IMR-90 (cell line): ENCODE measurements at regions of chr6 and their contacts with region 1.

Region 1: DNA sequence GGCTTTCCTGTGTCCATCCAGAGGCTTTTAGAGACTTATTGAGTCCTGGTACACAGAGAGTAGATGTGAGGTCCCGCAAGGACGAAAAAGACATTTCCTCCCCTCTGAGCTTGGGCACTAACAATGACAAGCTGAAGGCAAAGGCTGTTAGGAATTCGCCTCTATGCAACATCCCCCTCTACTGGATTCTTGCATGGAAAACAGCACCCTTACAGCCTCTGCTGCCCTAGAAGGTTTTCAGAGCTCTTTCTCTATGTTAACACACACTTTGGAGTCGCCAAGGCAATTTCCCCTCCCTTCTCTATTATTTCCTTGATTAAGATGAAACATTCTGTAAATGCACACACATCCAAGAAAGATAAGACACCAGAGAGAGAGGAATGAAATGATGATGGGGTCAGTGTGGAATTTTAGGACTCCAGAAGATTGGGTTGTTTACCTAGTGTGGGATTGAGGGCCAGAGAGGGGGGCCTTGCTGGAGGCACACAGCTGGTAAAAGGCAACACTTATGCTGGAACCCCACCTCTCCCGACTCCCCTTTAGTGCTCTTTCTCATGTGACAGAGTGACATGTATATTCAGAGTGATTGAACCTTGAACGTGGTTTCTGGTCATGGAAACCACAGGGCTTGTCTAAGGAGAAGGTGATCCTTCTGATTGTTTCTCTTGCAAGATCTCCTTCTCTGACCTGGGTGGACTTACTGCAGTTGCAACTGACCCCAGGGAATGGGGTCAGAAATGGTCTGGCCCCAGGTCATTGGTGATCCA is 300.7 kb downstream of the CLIC5 start:
- DNase-seq: peak; percentile 91
- ATAC-seq: peak; percentile 91
- H3K4me3 ChIP-seq: no peak overlapping the region
- H3K27ac ChIP-seq: no peak overlapping the region
- H3K4me1 ChIP-seq: peaks cover 15% of the 10 kb centered on the region
- H3K27me3 ChIP-seq: no peaks in the 10 kb centered on the region
- CTCF ChIP-seq: peak; percentile 94
- POLR2A ChIP-seq: 0 out of 2 replicates have a peak, but pooled peaks have one; percentile 58
- RAD21 ChIP-seq: peak; percentile 99

Region 2: GRCh38 chr6:44185953-44186634 is 1528.8 kb before region 1 on chr6:
- CTCF ChIA-PET with region 1: no interaction called
- POLR2A ChIA-PET with region 1: no interaction called
- dilution Hi-C with region 1: no loop called
- in situ Hi-C with region 1: no loop called
- intact Hi-C with region 1: no loop called
- DNase-seq: no peak
- ATAC-seq: no peak
- H3K4me3 ChIP-seq: no peak overlapping the region
- H3K27ac ChIP-seq: no peak overlapping the region
- H3K4me1 ChIP-seq: no peaks in the 10 kb centered on the region
- H3K27me3 ChIP-seq: peaks cover 29% of the 10 kb centered on the region
- CTCF ChIP-seq: no peak
- POLR2A ChIP-seq: no peak
- RAD21 ChIP-seq: no peak

Region 3: GRCh38 chr6:44630125-44631028 is 1084.5 kb before region 1 on chr6:
- CTCF ChIA-PET with region 1: interaction called, 16 read pairs
- POLR2A ChIA-PET with region 1: no interaction called
- dilution Hi-C with region 1: no loop called
- in situ Hi-C with region 1: no loop called
- intact Hi-C with region 1: loop called (anchors 1 kb)
- DNase-seq: peak; percentile 51
- ATAC-seq: peak; percentile 95
- H3K4me3 ChIP-seq: no peak overlapping the region
- H3K27ac ChIP-seq: no peak overlapping the region
- H3K4me1 ChIP-seq: no peaks in the 10 kb centered on the region
- H3K27me3 ChIP-seq: peaks cover 19% of the 10 kb centered on the region
- CTCF ChIP-seq: peak; percentile 68
- POLR2A ChIP-seq: no peak
- RAD21 ChIP-seq: peak; percentile 74

Region 4: DNA sequence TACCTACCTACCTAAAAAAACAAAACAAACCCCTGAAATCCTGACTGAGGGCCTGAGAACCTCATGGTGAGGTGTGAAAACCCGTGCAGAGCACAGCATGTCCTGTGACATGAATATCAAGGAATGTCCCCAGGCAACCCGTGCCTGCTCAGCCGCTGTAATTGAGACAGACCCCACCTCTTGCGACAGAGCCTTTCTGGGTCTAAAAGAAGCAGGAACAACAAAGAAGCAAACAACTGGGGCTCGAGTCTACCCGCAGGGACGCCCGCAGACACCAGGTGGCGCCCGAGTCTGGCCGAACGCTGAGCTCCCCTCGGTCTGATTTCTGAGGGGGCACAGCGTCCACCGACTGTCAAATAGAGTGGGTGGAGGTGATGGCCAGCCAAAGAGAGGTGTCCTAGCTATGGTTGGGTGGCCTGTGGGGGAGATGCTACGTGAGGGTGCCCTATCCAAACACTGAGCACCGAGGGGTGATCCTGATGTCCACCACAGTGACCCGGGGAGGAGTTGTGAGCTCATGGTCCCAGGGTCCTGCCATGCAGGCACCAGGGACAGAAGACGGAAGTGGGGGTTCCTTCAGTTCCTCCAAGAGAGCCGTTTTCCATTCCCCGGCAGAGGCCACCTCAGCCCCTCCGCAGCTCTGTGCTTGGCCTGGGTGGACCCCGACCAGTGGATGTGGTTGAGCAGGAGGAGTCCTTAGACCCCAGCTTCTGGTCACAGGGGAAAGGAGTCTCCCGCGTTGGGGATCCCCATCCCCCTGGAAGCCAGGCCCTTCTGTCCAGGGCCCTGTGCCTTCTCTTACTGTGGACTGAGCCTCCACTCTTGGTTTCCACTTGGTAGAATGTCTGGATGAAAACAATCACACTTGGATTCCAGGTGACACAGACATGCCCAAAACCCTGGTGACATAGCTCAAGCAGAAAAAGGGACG is 1059.2 kb before region 1 on chr6:
- CTCF ChIA-PET with region 1: interaction called, 6 read pairs
- POLR2A ChIA-PET with region 1: no interaction called
- dilution Hi-C with region 1: no loop called
- in situ Hi-C with region 1: no loop called
- intact Hi-C with region 1: loop called (anchors 2 kb)
- DNase-seq: peak; percentile 28
- ATAC-seq: peak; percentile 70
- H3K4me3 ChIP-seq: no peak overlapping the region
- H3K27ac ChIP-seq: no peak overlapping the region
- H3K4me1 ChIP-seq: peaks cover 10% of the 10 kb centered on the region
- H3K27me3 ChIP-seq: no peaks in the 10 kb centered on the region
- CTCF ChIP-seq: peak; percentile 90
- POLR2A ChIP-seq: no peak
- RAD21 ChIP-seq: peak; percentile 93

Region 5: GRCh38 chr6:45086360-45087084 is 628.4 kb before region 1 on chr6:
- CTCF ChIA-PET with region 1: no interaction called
- POLR2A ChIA-PET with region 1: no interaction called
- dilution Hi-C with region 1: no loop called
- in situ Hi-C with region 1: loop called (anchors 25 kb)
- intact Hi-C with region 1: loop called (anchors 10 kb)
- DNase-seq: no peak
- ATAC-seq: no peak
- H3K4me3 ChIP-seq: no peak overlapping the region
- H3K27ac ChIP-seq: no peak overlapping the region
- H3K4me1 ChIP-seq: no peaks in the 10 kb centered on the region
- H3K27me3 ChIP-seq: no peaks in the 10 kb centered on the region
- CTCF ChIP-seq: no peak
- POLR2A ChIP-seq: no peak
- RAD21 ChIP-seq: no peak

Region 6: DNA sequence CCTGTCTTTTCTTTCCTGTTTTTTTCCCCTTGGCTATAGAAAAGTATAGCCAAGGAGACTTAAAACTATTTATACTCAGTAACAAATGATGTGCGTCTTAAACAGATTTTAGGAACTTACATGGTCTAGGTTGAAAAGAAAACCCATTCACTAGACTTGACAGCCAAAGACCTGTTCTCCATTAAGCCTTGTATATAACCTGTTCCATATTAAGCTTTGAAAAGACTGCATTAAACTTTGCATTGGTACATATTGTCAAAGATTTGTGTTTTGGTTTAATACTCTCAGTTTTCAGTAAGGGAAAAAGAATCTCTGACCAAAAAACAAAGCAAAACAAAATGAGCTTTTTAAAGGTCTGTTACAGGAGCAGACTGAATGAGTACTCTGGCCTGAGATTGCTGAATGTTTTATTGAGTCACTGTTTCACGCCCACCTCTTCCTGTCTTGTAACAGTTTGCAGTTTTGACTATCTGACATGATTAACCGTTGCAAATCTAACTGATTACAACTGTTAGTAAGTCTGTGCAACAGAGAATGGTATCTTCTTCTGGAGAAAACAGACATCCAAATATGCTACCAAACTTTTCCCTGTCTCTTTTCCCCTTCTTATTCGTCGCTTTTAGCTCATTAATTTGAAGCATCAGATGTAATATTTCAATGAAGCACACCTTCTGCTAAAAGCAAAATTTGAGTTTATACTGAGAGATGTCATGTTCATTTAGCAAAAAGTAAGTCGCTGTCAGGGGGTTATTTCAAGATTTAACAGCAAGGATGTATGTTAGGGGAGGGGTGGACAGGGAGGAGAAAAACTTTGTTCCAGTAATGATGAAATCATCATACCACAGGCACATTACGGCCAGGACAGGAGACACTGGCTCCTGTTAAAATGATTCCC is 278.1 kb before region 1 on chr6:
- CTCF ChIA-PET with region 1: no interaction called
- POLR2A ChIA-PET with region 1: no interaction called
- dilution Hi-C with region 1: no loop called
- in situ Hi-C with region 1: no loop called
- intact Hi-C with region 1: loop called (anchors 5 kb)
- DNase-seq: peak; percentile 89
- ATAC-seq: peak; percentile 74
- H3K4me3 ChIP-seq: no peak overlapping the region
- H3K27ac ChIP-seq: no peak overlapping the region
- H3K4me1 ChIP-seq: peaks cover 16% of the 10 kb centered on the region
- H3K27me3 ChIP-seq: no peaks in the 10 kb centered on the region
- CTCF ChIP-seq: no peak
- POLR2A ChIP-seq: no peak
- RAD21 ChIP-seq: no peak; the same call in 1 of the 2 replicates

Region 7: DNA sequence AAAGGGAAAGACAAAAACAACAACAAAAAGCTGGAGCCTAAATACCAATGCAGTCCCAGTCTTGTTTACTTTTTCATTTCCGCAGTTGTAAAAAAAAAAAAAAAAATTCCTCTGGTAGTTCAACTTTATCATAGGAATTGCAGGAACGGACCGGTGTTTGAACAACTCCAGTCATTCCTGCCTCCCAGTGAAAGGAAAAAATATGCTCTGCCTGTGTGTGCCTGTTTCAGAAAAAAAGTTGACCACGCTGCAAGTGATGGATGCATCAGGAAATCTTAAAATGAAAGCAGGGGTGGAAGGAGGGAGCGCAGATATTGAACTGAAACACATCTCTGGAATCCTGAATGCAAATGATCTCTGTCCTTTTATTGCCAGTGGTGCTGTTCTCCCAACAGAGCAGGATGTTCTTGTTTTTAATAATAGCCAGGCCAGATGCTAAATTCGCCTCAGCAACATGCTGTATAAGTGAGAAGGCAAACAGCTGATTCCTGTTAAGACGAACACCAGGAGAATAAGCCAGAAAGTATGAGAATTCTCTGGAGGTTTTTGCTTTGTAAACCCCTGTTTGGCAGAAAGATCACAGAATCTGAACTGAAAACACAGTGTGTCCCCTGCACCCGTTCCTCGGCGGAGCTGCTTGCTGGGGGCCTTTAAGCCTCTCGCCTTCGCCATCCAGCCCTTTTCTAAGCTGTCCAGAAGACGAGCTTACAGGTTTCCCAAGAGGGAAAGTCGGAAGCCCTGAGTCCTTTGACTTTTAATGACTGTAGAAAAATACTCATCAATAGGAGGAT is 158.7 kb before region 1 on chr6:
- CTCF ChIA-PET with region 1: interaction called, 3 read pairs
- POLR2A ChIA-PET with region 1: no interaction called
- dilution Hi-C with region 1: no loop called
- in situ Hi-C with region 1: no loop called
- intact Hi-C with region 1: loop called (anchors 5 kb)
- DNase-seq: peak; percentile 60
- ATAC-seq: peak; percentile 64
- H3K4me3 ChIP-seq: peak overlapping the region; percentile 37
- H3K27ac ChIP-seq: peak overlapping the region; percentile 62
- H3K4me1 ChIP-seq: peaks cover 16% of the 10 kb centered on the region
- H3K27me3 ChIP-seq: no peaks in the 10 kb centered on the region
- CTCF ChIP-seq: no peak
- POLR2A ChIP-seq: no peak
- RAD21 ChIP-seq: no peak